Left cardiac atrium (tissue), 4 donors: ENCODE measurements at regions of chr9 and their contacts with region 1.

Region 1: GRCh38 chr9:127586537-127586936 is 25.5 kb upstream of the STXBP1 start:
- DNase-seq: peak; percentile 88
- ATAC-seq: peak; percentile 91 to 93

Region 2: GRCh38 chr9:127277099-127277498 is 309.4 kb before region 1 on chr9:
- intact Hi-C with region 1: no loop called
- DNase-seq: no peak
- ATAC-seq: no peak

Region 3: DNA sequence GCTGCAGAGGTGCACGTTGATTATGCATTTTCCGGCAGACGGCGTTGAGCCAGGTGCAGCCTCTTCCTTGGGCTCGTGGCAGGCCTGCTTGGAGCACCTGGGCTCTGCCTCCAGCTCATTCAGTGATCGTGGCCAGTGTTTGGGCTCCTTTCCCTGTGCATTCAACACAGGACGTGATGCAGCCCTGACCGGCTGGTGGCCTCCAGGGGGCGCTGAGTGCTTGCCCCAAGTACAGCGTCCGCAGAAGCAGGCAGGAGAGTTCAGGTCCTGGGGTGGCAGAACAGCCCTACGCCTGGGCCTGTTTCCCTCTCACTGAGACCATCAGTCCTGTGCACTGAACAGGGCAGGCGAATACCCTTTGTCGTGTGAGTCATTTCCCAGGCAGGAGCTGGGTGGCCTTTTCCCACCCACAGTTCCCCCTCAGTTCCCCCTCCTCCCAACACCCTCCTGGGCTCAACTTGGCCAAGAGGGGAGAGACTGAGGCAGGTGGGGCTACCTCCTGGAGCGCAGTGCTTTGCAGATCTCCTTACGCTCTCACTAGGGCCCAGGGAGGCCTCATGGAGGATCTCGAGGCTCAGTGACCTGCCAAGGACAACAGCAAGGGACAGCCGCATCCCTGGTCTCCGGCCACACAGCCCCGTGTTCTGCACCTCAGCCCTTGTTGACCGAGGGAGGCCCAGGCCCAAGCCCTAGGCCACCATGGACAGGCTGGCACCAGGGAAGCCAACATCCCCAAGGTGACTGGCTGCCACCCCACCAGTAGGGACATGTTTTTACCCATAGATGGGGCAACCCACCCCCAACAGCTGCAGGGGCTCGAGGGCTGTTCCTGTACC is 82.4 kb before region 1 on chr9:
- intact Hi-C with region 1: loop called (anchors 1 to 5 kb)
- DNase-seq: peak; percentile 88
- ATAC-seq: peak; percentile 74 to 89

Region 4: DNA sequence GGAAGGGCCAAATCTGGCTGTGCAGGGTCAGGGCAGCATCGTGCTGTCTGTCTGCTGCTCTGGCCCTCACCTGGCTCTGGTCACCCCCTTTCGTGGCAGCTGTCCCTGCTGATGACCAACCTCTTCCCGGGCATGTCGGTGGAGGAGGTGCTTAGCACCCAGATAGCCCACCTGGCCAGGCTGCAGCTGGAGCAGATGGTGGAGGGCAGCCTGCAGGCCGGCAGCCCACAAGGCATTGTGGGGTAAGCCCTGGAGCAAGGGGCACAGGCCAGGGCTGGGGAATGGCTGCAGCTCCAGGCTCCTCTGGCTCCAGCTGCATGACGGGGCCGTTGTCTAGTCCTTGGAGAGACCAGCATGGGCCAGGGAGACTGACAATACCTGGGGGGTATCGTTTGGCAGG is 140.3 kb after region 1 on chr9:
- intact Hi-C with region 1: loop called in 1 of 2 experiments (anchors 5 kb)
- DNase-seq: no peak
- ATAC-seq: no peak

Region 5: GRCh38 chr9:127916665-127917613 is 330.4 kb after region 1 on chr9 and contains the start of gene ST6GALNAC4:
- intact Hi-C with region 1: loop called (anchors 2 to 5 kb)
- DNase-seq: peak; percentile 94
- ATAC-seq: peak; percentile 94
- total RNA-seq, gene ST6GALNAC4: 35.8 to 49.9 TPM